HCT116 (cell line): ENCODE measurements at regions of chr1 and their contacts with region 1.

Region 1: GRCh38 chr1:241499910-241500309 is 19.6 kb downstream of the FH start:
- DNase-seq: no peak
- ATAC-seq: 0 out of 2 replicates have a peak, but pooled peaks have one; percentile 54
- H3K4me3 ChIP-seq: no peak overlapping the region
- H3K27ac ChIP-seq: no peak overlapping the region
- H3K4me1 ChIP-seq: no peaks in the 10 kb centered on the region
- H3K27me3 ChIP-seq: no peaks in the 10 kb centered on the region
- CTCF ChIP-seq: peak; percentile 18 to 64 (median 39); a peak in 5 of 6 replicates
- POLR2A ChIP-seq: no peak
- RAD21 ChIP-seq: peak; percentile 68

Region 2: DNA sequence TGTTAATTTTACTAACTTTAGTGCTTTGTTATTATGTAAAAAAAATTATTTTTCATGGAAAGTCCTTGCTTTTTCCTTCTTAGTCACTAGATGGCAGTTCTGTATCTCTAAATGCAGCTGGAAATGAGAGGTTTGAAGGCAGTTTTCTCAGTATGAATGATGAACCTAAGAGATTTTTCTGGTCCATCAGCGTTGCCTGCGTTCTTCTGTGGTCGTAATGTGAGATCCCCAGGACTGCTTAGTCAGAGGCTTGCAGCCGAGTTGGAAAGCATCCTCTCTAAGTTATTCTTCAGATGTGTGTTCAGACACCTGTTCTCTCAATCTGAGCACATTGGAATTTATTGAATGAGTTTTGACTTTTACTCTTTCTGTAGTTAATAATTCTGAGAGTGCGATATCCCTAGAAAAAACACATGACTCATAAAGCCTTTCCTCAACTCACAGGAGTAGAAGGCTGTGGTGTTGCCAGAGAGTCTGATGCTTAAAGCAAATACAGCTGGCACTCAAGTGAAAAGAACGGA is 1309.0 kb before region 1 on chr1:
- CTCF ChIA-PET with region 1: no interaction called
- POLR2A ChIA-PET with region 1: no interaction called
- RAD21 ChIA-PET with region 1: no interaction called
- intact Hi-C with region 1: loop called (anchors 10 kb)
- DNase-seq: no peak
- ATAC-seq: no peak
- H3K4me3 ChIP-seq: no peak overlapping the region
- H3K27ac ChIP-seq: no peak overlapping the region
- H3K4me1 ChIP-seq: no peaks in the 10 kb centered on the region
- H3K27me3 ChIP-seq: no peaks in the 10 kb centered on the region
- CTCF ChIP-seq: peak in 2 of 3 experiments; percentile 5 to 14; a peak in 1 of 6 replicates
- POLR2A ChIP-seq: no peak
- RAD21 ChIP-seq: peak; percentile 30; the same call in 1 of the 2 replicates

Region 3: GRCh38 chr1:240732390-240732789 is 767.5 kb before region 1 on chr1:
- CTCF ChIA-PET with region 1: no interaction called
- POLR2A ChIA-PET with region 1: no interaction called
- RAD21 ChIA-PET with region 1: no interaction called
- intact Hi-C with region 1: loop called (anchors 1 kb)
- DNase-seq: peak; percentile 12
- ATAC-seq: peak; percentile 76
- H3K4me3 ChIP-seq: no peak overlapping the region
- H3K27ac ChIP-seq: no peak overlapping the region
- H3K4me1 ChIP-seq: no peaks in the 10 kb centered on the region
- H3K27me3 ChIP-seq: no peaks in the 10 kb centered on the region
- CTCF ChIP-seq: peak; percentile 12 to 48 (median 32); a peak in 4 of 6 replicates
- POLR2A ChIP-seq: no peak
- RAD21 ChIP-seq: peak; percentile 56

Region 4: DNA sequence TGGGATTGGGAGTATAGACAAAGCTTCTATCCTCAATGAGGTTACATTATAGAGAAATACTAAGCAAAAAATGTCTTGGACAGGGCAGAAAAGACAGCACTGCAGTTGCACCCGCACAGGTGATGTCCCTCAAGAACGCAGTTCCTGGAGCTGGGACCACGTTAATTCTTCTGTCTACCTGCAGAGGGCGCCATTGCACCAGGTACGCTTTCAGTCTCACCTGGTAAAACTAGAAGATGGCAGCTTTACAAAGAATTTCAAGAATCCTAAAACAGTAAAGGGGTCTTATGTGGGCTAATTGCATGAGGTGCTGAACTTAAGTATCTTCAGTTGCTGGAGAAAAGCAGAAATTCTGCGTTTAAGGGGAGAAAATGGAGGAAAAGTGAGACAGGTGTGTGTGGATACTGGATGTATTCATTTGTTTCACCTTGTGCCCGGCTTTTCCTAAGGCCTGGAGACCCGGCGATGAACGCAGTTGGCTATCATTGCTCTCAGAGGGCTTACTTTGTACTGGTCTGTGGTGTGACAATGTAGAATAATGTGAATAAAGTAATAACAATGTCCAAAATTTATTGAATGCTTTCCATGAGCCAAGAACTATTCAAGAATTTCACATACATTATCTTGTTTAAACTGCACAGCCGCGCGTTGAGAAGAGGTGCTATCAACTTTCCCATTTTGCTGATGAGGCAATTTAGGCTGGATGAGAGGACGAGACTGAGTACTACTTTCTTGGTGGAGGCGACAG is 611.7 kb before region 1 on chr1:
- CTCF ChIA-PET with region 1: no interaction called
- POLR2A ChIA-PET with region 1: no interaction called
- RAD21 ChIA-PET with region 1: no interaction called
- intact Hi-C with region 1: loop called (anchors 2 kb)
- DNase-seq: peak; percentile 3
- ATAC-seq: peak; percentile 65; the same call in 1 of the 2 replicates
- H3K4me3 ChIP-seq: no peak overlapping the region
- H3K27ac ChIP-seq: no peak overlapping the region
- H3K4me1 ChIP-seq: no peaks in the 10 kb centered on the region
- H3K27me3 ChIP-seq: no peaks in the 10 kb centered on the region
- CTCF ChIP-seq: peak; percentile 18 to 78 (median 53); a peak in 5 of 6 replicates
- POLR2A ChIP-seq: no peak
- RAD21 ChIP-seq: peak; percentile 53